K562 (cell line): ENCODE measurements at regions of chr22 and their contacts with region 1.

Region 1: DNA sequence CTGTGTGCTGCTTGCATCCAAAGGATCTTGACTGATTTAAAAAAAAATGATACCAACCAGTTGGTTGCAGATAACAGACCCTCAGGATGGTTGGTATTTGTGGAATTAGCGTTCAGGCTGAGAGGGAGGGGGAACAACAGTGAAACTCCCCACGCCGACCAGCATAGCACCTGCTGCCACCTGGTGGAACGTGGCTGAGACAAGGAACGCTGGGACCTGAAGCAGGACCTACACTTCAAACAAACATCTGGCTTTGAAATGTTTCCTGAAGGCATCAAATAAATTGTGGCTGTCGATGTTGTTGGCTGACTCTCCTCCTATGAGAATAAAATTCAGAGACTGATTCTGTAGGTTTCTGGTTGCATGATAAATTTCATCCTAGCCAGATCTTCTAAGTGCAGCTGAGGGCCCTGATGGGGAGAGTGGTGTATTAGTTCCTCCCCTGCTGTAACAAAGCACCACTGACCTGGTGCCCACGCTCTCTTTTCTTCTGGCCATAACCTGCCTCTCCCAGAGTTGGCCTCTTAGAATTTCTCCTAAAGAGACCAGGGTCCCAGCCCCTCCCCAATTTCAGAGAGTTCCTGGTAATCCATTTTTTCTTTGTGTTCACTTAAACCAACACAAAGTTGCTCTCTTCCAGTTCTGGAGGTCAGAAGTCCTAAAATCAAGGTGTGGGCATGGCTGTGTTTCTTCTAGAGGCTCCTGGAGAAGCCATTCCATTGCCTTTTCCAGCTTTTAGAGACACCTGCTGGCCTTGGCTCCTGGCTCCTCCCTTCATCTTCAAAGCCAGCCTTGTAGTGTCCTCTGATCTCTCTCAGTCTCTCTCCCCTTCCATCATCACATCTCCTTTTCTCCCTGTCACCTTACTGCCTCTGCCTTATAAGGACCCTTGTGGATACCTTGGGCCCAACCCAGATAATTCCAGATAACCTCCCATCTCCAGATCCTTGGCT is 17.3 kb downstream of the APOL2 start:
- DNase-seq: peak; percentile 29 to 67 (median 40)
- ATAC-seq: peak; percentile 96
- H3K4me3 ChIP-seq: no peak overlapping the region
- H3K27ac ChIP-seq: no peak overlapping the region
- H3K4me1 ChIP-seq: peaks cover 0 to 8% of the 10 kb centered on the region in 2 experiments; a peak in 2 of 5 replicates
- H3K27me3 ChIP-seq: no peaks in the 10 kb centered on the region
- CTCF ChIP-seq: peak; percentile 69 to 81 (median 76)
- EP300 ChIP-seq: no peak
- POLR2A ChIP-seq: no peak
- RAD21 ChIP-seq: peak; percentile 54 to 84

Region 2: DNA sequence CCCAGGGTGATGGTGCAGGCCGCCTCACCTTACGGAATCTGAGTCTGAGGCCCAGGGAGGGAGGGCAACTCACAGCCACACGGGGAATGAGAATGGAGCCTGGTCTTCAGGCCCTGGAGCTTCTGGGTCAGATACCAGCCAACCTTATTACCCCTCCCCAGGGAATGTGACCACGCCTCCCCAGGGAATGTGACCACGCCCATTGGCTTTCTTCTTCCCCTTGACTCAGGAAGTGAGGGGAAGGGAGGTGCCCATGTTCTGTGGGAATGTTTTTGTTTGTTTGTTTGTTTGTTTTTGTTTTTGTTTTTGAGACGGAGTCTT is 135.9 kb before region 1 on chr22:
- CTCF ChIA-PET with region 1: no interaction called
- POLR2A ChIA-PET with region 1: no interaction called
- in situ Hi-C with region 1: no loop called
- intact Hi-C with region 1: no loop called
- DNase-seq: peak; percentile 31 to 54 (median 44)
- ATAC-seq: peak; percentile 65
- H3K4me3 ChIP-seq: no peak overlapping the region
- H3K27ac ChIP-seq: no peak overlapping the region
- H3K4me1 ChIP-seq: no peaks in the 10 kb centered on the region; a peak in 2 of 5 replicates
- H3K27me3 ChIP-seq: no peaks in the 10 kb centered on the region
- CTCF ChIP-seq: no peak
- EP300 ChIP-seq: no peak
- POLR2A ChIP-seq: no peak
- RAD21 ChIP-seq: no peak

Region 3: DNA sequence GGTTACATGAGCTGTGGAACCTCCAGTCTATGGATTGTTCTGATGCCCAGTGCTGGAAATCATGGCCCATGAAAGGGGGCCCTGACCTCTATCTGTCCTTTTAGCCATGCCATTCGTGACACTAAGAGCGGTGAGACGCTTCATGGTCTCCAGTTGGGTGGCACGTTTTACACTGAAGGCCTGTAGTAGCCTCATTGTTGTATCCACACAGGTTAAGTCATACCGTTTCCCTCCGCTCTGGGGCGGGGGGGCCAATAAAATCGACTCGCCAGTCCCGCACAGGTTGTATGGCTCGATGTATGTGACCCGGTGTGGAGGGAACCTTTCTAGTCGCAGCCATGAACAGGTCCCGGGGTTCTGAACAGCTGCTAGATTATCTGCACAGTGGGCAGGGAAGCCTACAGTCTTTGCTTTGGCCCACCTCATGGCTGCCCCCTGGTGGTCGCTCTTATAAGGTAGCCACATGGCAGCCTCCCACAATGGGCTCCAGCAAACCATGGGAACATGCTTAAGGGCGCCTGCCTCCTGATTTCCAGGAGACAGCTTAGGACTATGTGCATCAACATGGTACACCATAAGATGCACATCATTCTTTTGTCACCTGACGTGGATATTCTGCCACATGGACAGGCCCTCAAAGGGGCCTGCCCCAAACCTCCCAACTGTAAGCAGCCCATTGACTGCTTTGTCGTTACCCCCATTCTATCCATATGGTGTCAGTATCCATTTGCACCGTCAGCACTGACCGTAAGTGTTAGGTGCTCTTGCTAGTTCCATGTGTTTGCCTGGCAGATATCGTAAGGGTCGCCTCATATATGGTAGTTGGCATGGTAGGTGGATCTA is 41.8 kb before region 1 on chr22:
- CTCF ChIA-PET with region 1: interaction called, 3 read pairs
- POLR2A ChIA-PET with region 1: interaction called, 3 read pairs
- in situ Hi-C with region 1: no loop called
- intact Hi-C with region 1: loop called (anchors 5 kb)
- DNase-seq: peak; percentile 70 to 79 (median 74)
- ATAC-seq: peak; percentile 98
- H3K4me3 ChIP-seq: no peak overlapping the region
- H3K27ac ChIP-seq: no peak overlapping the region
- H3K4me1 ChIP-seq: peaks cover 0 to 6% of the 10 kb centered on the region in 2 experiments; a peak in 2 of 5 replicates
- H3K27me3 ChIP-seq: no peaks in the 10 kb centered on the region
- CTCF ChIP-seq: peak; percentile 73 to 84 (median 80)
- EP300 ChIP-seq: no peak
- POLR2A ChIP-seq: no peak
- RAD21 ChIP-seq: peak; percentile 62 to 80

Region 4: GRCh38 chr22:36194971-36195370 is 27.1 kb before region 1 on chr22:
- CTCF ChIA-PET with region 1: interaction called, 6 read pairs
- POLR2A ChIA-PET with region 1: no interaction called
- in situ Hi-C with region 1: no loop called
- intact Hi-C with region 1: loop called (anchors 1 kb)
- DNase-seq: peak in 2 of 4 experiments; percentile 20 to 56
- ATAC-seq: peak; percentile 72
- H3K4me3 ChIP-seq: no peak overlapping the region
- H3K27ac ChIP-seq: no peak overlapping the region
- H3K4me1 ChIP-seq: peaks cover 21 to 27% of the 10 kb centered on the region in 2 experiments; a peak in 4 of 5 replicates
- H3K27me3 ChIP-seq: no peaks in the 10 kb centered on the region
- CTCF ChIP-seq: peak; percentile 60 to 73 (median 60)
- EP300 ChIP-seq: no peak
- POLR2A ChIP-seq: no peak
- RAD21 ChIP-seq: peak; percentile 39 to 73; a peak in 3 of 4 replicates

Region 5: DNA sequence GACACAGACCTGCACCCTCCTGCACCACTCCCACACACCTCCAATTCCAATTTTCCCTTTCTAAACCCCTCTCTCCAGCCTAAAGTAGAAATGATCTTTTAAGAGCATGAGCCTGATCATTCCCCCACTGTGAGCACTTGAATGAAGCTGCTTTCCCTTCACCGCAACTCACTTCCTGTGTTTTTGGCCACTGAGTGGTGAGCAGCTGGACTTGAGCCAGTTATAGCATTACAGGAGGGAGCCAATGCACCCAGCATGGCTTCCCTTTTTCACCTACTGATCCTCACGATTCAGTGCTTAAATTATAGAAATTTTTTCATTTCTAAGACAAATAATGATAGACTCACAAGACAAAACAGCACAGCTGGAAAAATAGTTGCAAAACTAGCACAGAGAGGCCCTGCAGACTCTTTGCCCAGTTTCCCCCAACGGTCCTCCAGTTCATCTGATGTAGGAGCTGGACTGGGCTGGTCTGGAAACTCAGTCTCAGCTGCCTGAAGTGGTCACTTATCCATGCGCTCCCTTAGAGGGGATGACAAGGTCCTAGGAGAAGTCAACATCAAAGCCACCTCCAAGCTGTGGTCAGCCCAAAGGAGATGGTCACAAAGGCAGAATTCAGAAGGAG is 10.7 kb before region 1 on chr22:
- CTCF ChIA-PET with region 1: no interaction called
- POLR2A ChIA-PET with region 1: no interaction called
- in situ Hi-C with region 1: no loop called
- intact Hi-C with region 1: no loop called
- DNase-seq: peak in 1 of 4 experiments; percentile 32
- ATAC-seq: 0 out of 3 replicates have a peak, but pooled peaks have one; percentile 26
- H3K4me3 ChIP-seq: no peak overlapping the region
- H3K27ac ChIP-seq: no peak overlapping the region
- H3K4me1 ChIP-seq: no peaks in the 10 kb centered on the region; a peak in 1 of 5 replicates
- H3K27me3 ChIP-seq: no peaks in the 10 kb centered on the region
- CTCF ChIP-seq: no peak
- EP300 ChIP-seq: no peak
- POLR2A ChIP-seq: no peak
- RAD21 ChIP-seq: no peak